ENCODE measurements at regions of chr4 and their contacts with region 1.

Region 1: GRCh38 chr4:26410385-26411293 is 79.6 kb downstream of the CCKAR start:
- DNase-seq: peak in 1 of 2 donors; percentile 76
- ATAC-seq: peak; percentile 44 to 65 (median 52)
- H3K4me3 ChIP-seq: no peak overlapping the region
- H3K4me3 Mint-ChIP-seq: no peak overlapping the region
- H3K27ac ChIP-seq: no peak overlapping the region
- H3K27ac Mint-ChIP-seq: no peak overlapping the region
- H3K4me1 ChIP-seq: no peaks in the 10 kb centered on the region
- H3K4me1 Mint-ChIP-seq: no peaks in the 10 kb centered on the region
- H3K27me3 ChIP-seq: no peaks in the 10 kb centered on the region
- H3K27me3 Mint-ChIP-seq: no peaks in the 10 kb centered on the region
- CTCF ChIP-seq: peak; percentile 83

Region 2: GRCh38 chr4:25993395-25994185 is 417.0 kb before region 1 on chr4:
- intact Hi-C with region 1: loop called (anchors 1 kb)
- DNase-seq: peak in 1 of 2 donors; percentile 10
- ATAC-seq: no peak
- H3K4me3 ChIP-seq: no peak overlapping the region
- H3K4me3 Mint-ChIP-seq: no peak overlapping the region
- H3K27ac ChIP-seq: no peak overlapping the region
- H3K27ac Mint-ChIP-seq: no peak overlapping the region
- H3K4me1 ChIP-seq: no peaks in the 10 kb centered on the region
- H3K4me1 Mint-ChIP-seq: no peaks in the 10 kb centered on the region
- H3K27me3 ChIP-seq: no peaks in the 10 kb centered on the region
- H3K27me3 Mint-ChIP-seq: peaks cover 5 to 7% of the 10 kb centered on the region in 2 donors
- CTCF ChIP-seq: no peak

Region 3: DNA sequence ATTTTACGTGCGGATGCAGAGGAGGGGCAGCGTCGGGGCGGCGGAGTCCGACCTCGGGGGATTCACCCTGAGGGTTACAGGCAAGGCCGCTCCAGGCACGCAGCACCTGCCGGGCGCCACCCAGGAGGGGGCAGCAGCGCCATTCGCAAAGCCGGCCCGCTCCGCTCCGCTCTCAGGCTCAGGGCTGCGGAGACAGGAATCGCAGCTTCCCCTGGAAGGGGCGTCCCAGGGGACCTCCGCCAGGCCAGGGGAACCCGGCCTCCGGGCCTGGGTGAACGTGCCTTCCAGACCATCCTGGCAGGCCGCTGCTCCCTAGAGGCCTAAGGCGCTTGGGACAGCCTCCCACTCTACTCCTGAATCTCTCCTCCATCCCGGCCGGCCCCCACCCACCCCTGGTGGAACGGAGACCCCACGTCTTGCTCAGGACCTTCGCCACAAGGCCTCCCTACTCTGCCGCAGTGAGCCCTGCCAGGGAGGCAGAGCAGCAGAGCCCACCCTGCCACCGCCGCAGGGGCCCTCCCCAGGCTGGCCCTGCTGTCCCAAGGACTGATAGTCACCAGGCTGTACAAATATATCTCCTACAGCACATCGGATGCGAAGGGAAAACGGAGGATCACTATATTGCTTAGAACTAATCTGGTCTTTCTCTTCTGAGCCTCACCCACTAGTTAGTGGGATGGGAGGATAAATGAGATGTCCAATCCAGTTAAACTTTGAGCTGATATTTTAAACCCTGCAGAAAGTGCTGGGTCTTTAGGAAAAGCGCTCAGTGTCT is 381.7 kb before region 1 on chr4:
- intact Hi-C with region 1: loop called (anchors 1 kb)
- DNase-seq: peak; percentile 27 to 66
- ATAC-seq: peak; percentile 70 to 88 (median 72)
- H3K4me3 ChIP-seq: no peak overlapping the region
- H3K4me3 Mint-ChIP-seq: no peak overlapping the region
- H3K27ac ChIP-seq: no peak overlapping the region
- H3K27ac Mint-ChIP-seq: no peak overlapping the region
- H3K4me1 ChIP-seq: peaks cover 5% of the 10 kb centered on the region
- H3K4me1 Mint-ChIP-seq: peaks cover 0 to 6% of the 10 kb centered on the region in 2 donors
- H3K27me3 ChIP-seq: no peaks in the 10 kb centered on the region
- H3K27me3 Mint-ChIP-seq: peaks cover 25 to 30% of the 10 kb centered on the region in 2 donors
- CTCF ChIP-seq: peak; percentile 36

Region 4: DNA sequence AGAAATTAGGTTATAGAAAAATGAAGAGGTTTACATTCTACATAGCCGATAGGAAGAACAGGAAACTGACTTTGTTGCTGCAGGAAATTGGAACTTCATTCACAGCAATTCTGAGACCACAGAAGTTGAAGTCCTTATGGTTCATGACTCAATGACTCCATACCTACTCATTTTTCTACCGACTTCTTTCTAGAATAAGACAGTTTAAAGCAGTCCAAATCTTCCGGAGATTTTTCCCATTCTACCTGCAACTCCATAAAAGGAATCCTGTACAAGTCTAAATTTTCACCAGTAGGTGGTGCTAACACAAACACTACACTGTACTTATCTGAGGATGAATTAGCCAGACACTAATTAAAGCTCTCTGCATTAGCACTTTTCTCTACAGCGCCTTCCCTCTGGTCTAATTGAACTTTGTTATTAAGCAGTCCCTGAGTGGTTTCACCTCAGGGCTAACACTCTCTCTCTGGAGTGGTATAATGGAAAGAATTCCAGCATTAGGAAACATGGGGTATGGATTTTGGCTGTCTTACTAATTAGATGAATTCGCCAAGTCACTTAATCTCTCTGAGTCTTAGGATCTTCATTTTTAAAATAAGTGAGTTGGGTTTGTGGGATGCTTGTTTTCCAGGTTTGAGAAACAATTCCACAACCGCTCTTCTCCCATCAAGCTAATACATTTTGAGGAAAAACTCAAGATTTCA is 328.7 kb before region 1 on chr4:
- intact Hi-C with region 1: loop called (anchors 1 kb)
- DNase-seq: peak in 1 of 2 donors; percentile 69
- ATAC-seq: peak; percentile 53 to 68 (median 55)
- H3K4me3 ChIP-seq: no peak overlapping the region
- H3K4me3 Mint-ChIP-seq: no peak overlapping the region
- H3K27ac ChIP-seq: no peak overlapping the region
- H3K27ac Mint-ChIP-seq: no peak overlapping the region
- H3K4me1 ChIP-seq: no peaks in the 10 kb centered on the region
- H3K4me1 Mint-ChIP-seq: peaks cover 10 to 16% of the 10 kb centered on the region in 2 donors
- H3K27me3 ChIP-seq: peaks cover 3% of the 10 kb centered on the region
- H3K27me3 Mint-ChIP-seq: peaks cover 32 to 57% of the 10 kb centered on the region in 2 donors
- CTCF ChIP-seq: peak; percentile 68

Region 5: GRCh38 chr4:26217961-26218676 is 192.5 kb before region 1 on chr4:
- intact Hi-C with region 1: no loop called
- DNase-seq: no peak
- ATAC-seq: no peak
- H3K4me3 ChIP-seq: no peak overlapping the region
- H3K4me3 Mint-ChIP-seq: no peak overlapping the region
- H3K27ac ChIP-seq: peak overlapping the region; percentile 31
- H3K27ac Mint-ChIP-seq: no peak overlapping the region
- H3K4me1 ChIP-seq: peaks cover 7% of the 10 kb centered on the region
- H3K4me1 Mint-ChIP-seq: peaks cover 0 to 9% of the 10 kb centered on the region in 2 donors
- H3K27me3 ChIP-seq: peaks cover 3% of the 10 kb centered on the region
- H3K27me3 Mint-ChIP-seq: peaks cover 12 to 21% of the 10 kb centered on the region in 2 donors
- CTCF ChIP-seq: no peak

Region 6: DNA sequence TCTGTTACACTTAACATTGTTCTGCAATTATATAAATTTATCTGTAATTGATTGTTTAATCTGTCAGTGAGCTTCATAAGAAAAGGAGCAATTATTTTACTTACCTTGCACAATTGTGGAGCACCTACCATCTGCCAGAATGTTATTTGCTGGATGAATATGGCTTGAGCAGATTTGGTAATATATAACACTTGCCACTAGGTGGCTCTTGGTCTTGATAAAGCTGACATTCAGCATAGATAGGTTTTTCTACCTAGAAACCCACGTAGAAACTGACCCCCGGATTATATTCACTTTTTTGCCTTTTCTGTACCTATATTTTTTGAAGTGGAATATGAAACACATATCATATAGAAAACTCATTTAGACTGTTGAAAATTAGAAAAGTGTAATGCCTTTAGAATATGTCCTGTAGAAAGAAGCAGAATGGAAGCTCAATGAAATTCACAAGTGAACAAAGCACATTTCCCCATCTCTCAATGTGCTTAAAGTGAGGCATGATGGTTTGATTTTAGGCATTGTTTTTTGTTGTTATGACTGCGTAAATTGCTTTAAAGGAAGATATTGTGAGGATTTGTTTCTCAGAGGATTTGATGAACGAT is 80.4 kb before region 1 on chr4:
- intact Hi-C with region 1: loop called (anchors 1 kb)
- DNase-seq: peak in 1 of 2 donors; percentile 75
- ATAC-seq: peak; percentile 70 to 88 (median 86)
- H3K4me3 ChIP-seq: no peak overlapping the region
- H3K4me3 Mint-ChIP-seq: no peak overlapping the region
- H3K27ac ChIP-seq: no peak overlapping the region
- H3K27ac Mint-ChIP-seq: no peak overlapping the region
- H3K4me1 ChIP-seq: no peaks in the 10 kb centered on the region
- H3K4me1 Mint-ChIP-seq: peaks cover 16 to 25% of the 10 kb centered on the region in 2 donors
- H3K27me3 ChIP-seq: no peaks in the 10 kb centered on the region
- H3K27me3 Mint-ChIP-seq: no peaks in the 10 kb centered on the region
- CTCF ChIP-seq: peak; percentile 89

Measured in natural killer cell (primary cell).